Transverse colon (tissue), 4 donors: ENCODE measurements at regions of chr11 and their contacts with region 1.

Region 1: GRCh38 chr11:44634401-44635281 is 69.2 kb downstream of the CD82 start:
- DNase-seq: peak; percentile 51
- H3K4me3 ChIP-seq: no peak overlapping the region
- H3K27ac ChIP-seq: peak overlapping the region in 1 of 4 donors; percentile 5
- H3K4me1 ChIP-seq: peaks cover 0 to 10% (median 5%) of the 10 kb centered on the region in 4 donors
- H3K27me3 ChIP-seq: peaks cover 57% of the 10 kb centered on the region
- CTCF ChIP-seq: no peak
- EP300 ChIP-seq: no peak
- POLR2A ChIP-seq: no peak

Region 2: DNA sequence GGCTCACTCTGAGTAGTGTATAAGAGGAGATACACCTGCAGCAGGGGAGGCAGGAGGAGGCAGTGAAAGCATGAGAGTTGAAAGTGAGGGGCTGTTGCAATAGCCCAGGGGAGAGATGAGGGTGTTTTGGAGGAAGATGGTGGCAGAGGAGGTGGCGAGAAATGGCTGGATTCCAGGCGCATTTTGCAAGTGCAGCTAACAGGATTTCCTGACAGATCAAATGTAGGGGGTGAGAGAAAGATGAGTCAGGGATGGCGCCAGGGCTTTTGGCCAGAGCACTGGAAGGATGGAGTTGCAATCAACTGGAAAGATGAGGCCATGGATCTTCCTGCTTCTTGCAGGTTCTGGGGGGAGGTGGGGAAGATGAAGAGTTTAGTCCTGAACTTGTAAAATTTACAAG is 75.3 kb after region 1 on chr11:
- in situ Hi-C with region 1: loop called in 1 of 4 experiments (anchors 10 kb)
- intact Hi-C with region 1: no loop called
- DNase-seq: no peak
- H3K4me3 ChIP-seq: no peak overlapping the region
- H3K27ac ChIP-seq: no peak overlapping the region
- H3K4me1 ChIP-seq: no peaks in the 10 kb centered on the region
- H3K27me3 ChIP-seq: no peaks in the 10 kb centered on the region
- CTCF ChIP-seq: no peak
- EP300 ChIP-seq: no peak
- POLR2A ChIP-seq: no peak